ENCODE measurements at regions of chr14 and their contacts with region 1.

Region 1: GRCh38 chr14:93959239-93960107 is 16.9 kb downstream of the ASB2 start:
- DNase-seq: peak; percentile 67
- ATAC-seq: no peak

Region 2: GRCh38 chr14:93994919-93995682 is 35.6 kb after region 1 on chr14:
- intact Hi-C with region 1: loop called (anchors 5 kb)
- DNase-seq: peak; percentile 80
- ATAC-seq: peak; percentile 41